MCF 10A (cell line): ENCODE measurements at regions of chr9 and their contacts with region 1.

Region 1: GRCh38 chr9:31119882-31120454 is 1264.5 kb upstream of the ACO1 start:
- DNase-seq: peak; percentile 58
- H3K4me3 Mint-ChIP-seq: no peak overlapping the region
- H3K27ac Mint-ChIP-seq: no peak overlapping the region
- H3K4me1 Mint-ChIP-seq: peaks cover 5% of the 10 kb centered on the region
- H3K27me3 Mint-ChIP-seq: peaks cover 2% of the 10 kb centered on the region
- CTCF ChIP-seq: peak; percentile 50

Region 2: DNA sequence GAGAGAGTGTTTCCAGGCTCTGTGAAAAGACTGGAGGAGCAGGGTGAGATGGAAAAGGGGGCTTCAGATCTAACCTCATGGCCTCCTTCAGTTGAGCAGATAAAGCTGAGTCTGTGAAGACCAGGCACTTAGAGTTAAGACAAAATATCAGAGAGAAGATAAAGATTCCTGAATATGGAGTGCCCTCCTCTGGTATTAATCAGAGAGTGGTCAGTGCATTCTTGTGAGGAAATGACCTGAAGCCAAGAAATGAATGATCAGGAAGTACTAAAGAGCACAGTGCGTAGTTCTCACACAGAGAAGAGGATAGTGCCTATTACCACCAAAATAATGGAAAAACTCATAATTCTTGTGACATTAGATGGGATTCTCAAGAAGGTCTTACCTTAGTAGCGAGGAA is 152.5 kb before region 1 on chr9:
- CTCF ChIA-PET with region 1: no interaction called
- POLR2A ChIA-PET with region 1: no interaction called
- intact Hi-C with region 1: no loop called
- DNase-seq: peak; percentile 27
- H3K4me3 Mint-ChIP-seq: no peak overlapping the region
- H3K27ac Mint-ChIP-seq: no peak overlapping the region
- H3K4me1 Mint-ChIP-seq: no peaks in the 10 kb centered on the region
- H3K27me3 Mint-ChIP-seq: peaks cover 21% of the 10 kb centered on the region
- CTCF ChIP-seq: peak; percentile 41

Region 3: DNA sequence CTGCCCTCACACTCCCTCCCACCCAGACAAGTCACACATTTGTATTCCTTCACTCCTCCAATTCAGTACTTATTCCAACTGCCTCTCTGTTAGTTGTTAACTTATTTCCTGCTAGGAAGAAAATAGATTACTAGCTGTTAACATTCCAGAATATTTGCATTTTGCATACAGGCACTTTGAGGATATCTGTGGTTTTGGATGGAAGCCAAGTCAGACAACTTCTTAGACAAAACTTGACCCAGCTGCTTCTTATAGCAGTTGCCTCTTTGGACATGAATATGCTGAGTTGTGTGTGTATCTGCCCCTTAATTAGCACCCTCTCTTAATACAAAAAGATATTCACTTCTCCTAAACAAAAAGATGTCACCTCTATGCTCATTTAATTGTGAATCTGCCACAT is 16.1 kb before region 1 on chr9:
- CTCF ChIA-PET with region 1: interaction called, 10 read pairs
- POLR2A ChIA-PET with region 1: no interaction called
- intact Hi-C with region 1: no loop called
- DNase-seq: peak; percentile 17
- H3K4me3 Mint-ChIP-seq: no peak overlapping the region
- H3K27ac Mint-ChIP-seq: no peak overlapping the region
- H3K4me1 Mint-ChIP-seq: no peaks in the 10 kb centered on the region
- H3K27me3 Mint-ChIP-seq: peaks cover 57% of the 10 kb centered on the region
- CTCF ChIP-seq: no peak

Region 4: GRCh38 chr9:31304576-31304975 is 184.6 kb after region 1 on chr9:
- CTCF ChIA-PET with region 1: interaction called, 10 read pairs
- POLR2A ChIA-PET with region 1: interaction called, 4 read pairs
- intact Hi-C with region 1: loop called (anchors 2 kb)
- DNase-seq: peak; percentile 84
- H3K4me3 Mint-ChIP-seq: peak overlapping the region; percentile 33
- H3K27ac Mint-ChIP-seq: peak overlapping the region; percentile 88
- H3K4me1 Mint-ChIP-seq: peaks cover 8% of the 10 kb centered on the region
- H3K27me3 Mint-ChIP-seq: no peaks in the 10 kb centered on the region
- CTCF ChIP-seq: no peak

Region 5: GRCh38 chr9:31542384-31543055 is 422.6 kb after region 1 on chr9:
- CTCF ChIA-PET with region 1: interaction called, 8 read pairs
- POLR2A ChIA-PET with region 1: no interaction called
- intact Hi-C with region 1: loop called (anchors 10 kb)
- DNase-seq: peak; percentile 76
- H3K4me3 Mint-ChIP-seq: peak overlapping the region; percentile 12
- H3K27ac Mint-ChIP-seq: peak overlapping the region; percentile 49
- H3K4me1 Mint-ChIP-seq: peaks cover 14% of the 10 kb centered on the region
- H3K27me3 Mint-ChIP-seq: no peaks in the 10 kb centered on the region
- CTCF ChIP-seq: peak; percentile 42